ENCODE measurements at regions of chr2 and their contacts with region 1.

Region 1: DNA sequence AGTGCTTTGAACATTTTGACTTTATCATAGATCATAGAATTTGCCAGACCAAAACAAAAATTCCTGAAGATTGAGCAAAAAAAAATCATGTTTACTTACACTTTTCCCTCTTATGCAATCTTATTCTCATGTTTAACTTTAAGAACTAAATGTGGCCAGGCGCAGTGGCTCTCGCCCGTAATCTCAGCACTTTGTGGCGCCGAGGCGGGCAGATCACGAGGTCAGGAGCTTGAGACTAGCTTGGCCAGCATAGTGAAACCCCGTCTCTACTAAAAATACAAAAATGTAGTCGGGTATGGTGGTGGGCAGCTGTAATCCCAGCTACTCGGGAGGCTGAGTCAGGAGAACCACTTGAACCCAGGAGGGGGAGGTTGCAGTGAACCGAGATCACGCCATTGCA is 227.9 kb upstream of the KYNU start:
- DNase-seq: no peak

Region 2: GRCh38 chr2:142445551-142446072 is 204.0 kb before region 1 on chr2:
- intact Hi-C with region 1: no loop called
- DNase-seq: no peak

Region 3: GRCh38 chr2:142585785-142586184 is 63.8 kb before region 1 on chr2:
- intact Hi-C with region 1: no loop called
- DNase-seq: no peak

Region 4: GRCh38 chr2:142694282-142694681 is 44.7 kb after region 1 on chr2:
- intact Hi-C with region 1: loop called in 1 of 2 experiments (anchors 1 kb)
- DNase-seq: no peak

Region 5: GRCh38 chr2:143058851-143059250 is 409.3 kb after region 1 on chr2:
- intact Hi-C with region 1: no loop called
- DNase-seq: no peak

Measured in posterior vena cava (tissue), 2 donors.